Activated CD8-positive, alpha-beta T cell treated with anti-CD3 and anti-CD28 coated beads, Interleukin-2, amount 10 ng/mL, durations not matched to agents 7 days and 5 days (primary cell): ENCODE measurements at regions of chr5 and their contacts with region 1.

Region 1: GRCh38 chr5:178130604-178131485 is at the start of gene RMND5B:
- DNase-seq: peak; percentile 77
- ATAC-seq: peak; percentile 86
- H3K4me3 Mint-ChIP-seq: peak within 1 kb of the TSS; percentile 68
- H3K27ac Mint-ChIP-seq: peak within 1 kb of the TSS; percentile 69
- H3K4me1 Mint-ChIP-seq: peaks cover 18% of the 10 kb centered on the region
- H3K27me3 Mint-ChIP-seq: peaks cover 6% of the 10 kb centered on the region
- total RNA-seq, gene RMND5B: 3.8 to 6.0 TPM

Region 2: GRCh38 chr5:178146020-178146820 is 15.4 kb after region 1 on chr5:
- CTCF ChIA-PET with region 1: interaction called, 10 read pairs
- POLR2A ChIA-PET with region 1: no interaction called
- DNase-seq: peak; percentile 83
- ATAC-seq: peak; percentile 89
- H3K4me3 Mint-ChIP-seq: no peak overlapping the region
- H3K27ac Mint-ChIP-seq: no peak overlapping the region
- H3K4me1 Mint-ChIP-seq: peaks cover 25% of the 10 kb centered on the region
- H3K27me3 Mint-ChIP-seq: no peaks in the 10 kb centered on the region

Region 3: DNA sequence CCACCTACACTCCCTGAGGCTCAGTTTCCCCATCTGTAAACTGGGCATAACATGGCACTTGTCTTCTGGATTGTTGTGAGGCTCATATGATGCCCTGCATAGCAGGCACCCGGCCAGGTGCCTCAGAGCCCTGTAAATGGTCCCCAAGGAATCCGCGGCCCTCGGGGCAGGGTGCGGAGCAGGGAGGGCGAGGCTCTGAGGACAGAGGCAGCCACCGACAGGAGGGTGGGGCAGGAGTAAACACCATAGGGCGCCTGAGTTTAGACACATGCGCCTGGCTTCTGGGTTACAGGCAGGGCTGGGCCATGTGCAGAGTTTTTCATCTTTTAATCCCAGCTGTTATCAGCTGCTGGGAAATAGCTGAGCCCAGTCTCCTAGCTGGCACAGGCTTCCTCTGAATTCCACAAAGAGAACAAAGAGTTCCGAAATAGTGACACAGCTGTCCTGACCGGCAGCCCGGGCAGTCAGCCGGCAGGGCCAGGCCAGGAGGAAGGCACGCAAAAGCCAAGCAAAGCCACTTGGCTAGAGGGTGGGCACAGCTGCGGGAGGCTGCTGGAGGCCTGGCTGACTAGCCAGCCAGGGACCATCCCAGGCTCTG is 200.7 kb after region 1 on chr5:
- CTCF ChIA-PET with region 1: no interaction called
- POLR2A ChIA-PET with region 1: no interaction called
- DNase-seq: no peak
- ATAC-seq: no peak
- H3K4me3 Mint-ChIP-seq: no peak overlapping the region
- H3K27ac Mint-ChIP-seq: peak overlapping the region; percentile 96
- H3K4me1 Mint-ChIP-seq: peaks cover 10% of the 10 kb centered on the region
- H3K27me3 Mint-ChIP-seq: no peaks in the 10 kb centered on the region